ENCODE measurements at regions of chr18 and their contacts with region 1.

Region 1: DNA sequence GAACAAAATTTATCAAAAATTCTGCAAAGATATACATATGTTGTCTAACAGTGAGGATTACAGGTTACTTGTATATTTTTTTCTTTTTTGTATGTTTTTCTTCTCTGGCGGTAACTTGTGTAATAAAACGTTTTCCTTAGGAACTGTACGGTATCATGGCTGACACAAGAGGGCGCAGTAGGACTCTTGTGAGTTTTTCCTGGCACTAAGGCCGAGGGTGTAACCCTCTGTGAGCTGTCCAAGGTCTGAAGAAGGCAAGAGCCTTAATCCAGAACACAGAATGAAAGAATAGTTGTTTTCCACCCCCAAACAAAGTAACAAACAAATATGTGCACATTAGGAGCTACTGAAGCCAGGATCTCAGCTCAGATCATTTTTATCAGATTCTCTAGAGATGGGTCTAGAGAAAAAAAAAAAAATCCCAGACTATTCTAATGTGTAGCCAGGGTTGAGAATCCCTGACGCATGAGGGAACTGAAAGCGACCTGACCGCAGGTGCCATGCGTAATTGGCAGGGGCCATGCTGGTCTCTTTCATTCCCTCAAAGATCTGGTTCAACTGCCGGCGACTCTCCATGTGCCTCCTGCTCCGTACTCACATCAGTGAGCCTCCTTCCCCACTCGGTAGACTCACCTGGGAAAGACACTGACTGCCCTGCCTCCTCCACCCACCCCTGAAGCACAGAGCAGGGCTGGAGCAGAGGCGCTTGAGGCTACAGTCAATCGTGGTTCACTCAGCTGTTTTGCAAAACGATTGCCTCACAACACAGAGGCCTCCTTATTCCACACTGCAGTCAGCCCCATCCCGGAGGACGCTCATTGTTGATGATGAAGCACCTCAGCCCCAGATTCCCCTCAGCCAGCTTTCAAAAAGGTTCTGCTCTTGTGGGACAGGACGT is 26.9 kb downstream of the TMEM200C start:
- DNase-seq: peak; percentile 60
- H3K4me3 Mint-ChIP-seq: no peak overlapping the region
- H3K27ac Mint-ChIP-seq: no peak overlapping the region
- H3K4me1 Mint-ChIP-seq: no peaks in the 10 kb centered on the region
- H3K27me3 Mint-ChIP-seq: no peaks in the 10 kb centered on the region

Region 2: GRCh38 chr18:5853253-5853652 is 15.2 kb before region 1 on chr18:
- CTCF ChIA-PET with region 1: no interaction called
- DNase-seq: no peak
- H3K4me3 Mint-ChIP-seq: no peak overlapping the region
- H3K27ac Mint-ChIP-seq: no peak overlapping the region
- H3K4me1 Mint-ChIP-seq: no peaks in the 10 kb centered on the region
- H3K27me3 Mint-ChIP-seq: no peaks in the 10 kb centered on the region

Region 3: GRCh38 chr18:5879479-5879882 is 11.0 kb after region 1 on chr18:
- CTCF ChIA-PET with region 1: interaction called, 14 read pairs
- DNase-seq: no peak
- H3K4me3 Mint-ChIP-seq: no peak overlapping the region
- H3K27ac Mint-ChIP-seq: no peak overlapping the region
- H3K4me1 Mint-ChIP-seq: no peaks in the 10 kb centered on the region
- H3K27me3 Mint-ChIP-seq: no peaks in the 10 kb centered on the region

Measured in activated naive CD4-positive, alpha-beta T cell treated with anti-CD3 and anti-CD28 coated beads, Interleukin-2, amount 10 ng/mL, durations not matched to agents 7 days and 5 days (primary cell).